ENCODE measurements at regions of chr11 and their contacts with region 1.

Region 1: DNA sequence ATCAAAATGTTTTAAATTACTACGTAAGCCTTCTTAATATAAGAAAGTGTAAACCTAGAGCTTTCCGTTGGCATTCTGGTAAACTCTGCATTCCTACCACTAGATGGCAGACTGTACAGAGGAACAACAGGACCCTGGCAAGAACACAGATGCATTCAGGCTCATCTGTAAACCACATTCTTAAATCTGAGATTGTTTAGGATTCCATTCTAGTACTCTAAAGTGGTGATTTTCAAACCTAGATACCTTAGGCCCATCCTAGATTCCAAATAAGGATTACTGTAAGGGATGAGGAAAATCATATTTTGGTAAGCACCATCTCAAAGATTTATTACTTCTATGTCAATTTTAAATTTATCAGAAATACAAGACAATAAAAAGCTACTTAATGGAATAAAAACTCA is 26.9 kb downstream of the PICALM start:
- DNase-seq: peak; percentile 86 to 93 (median 92)
- H3K4me3 ChIP-seq: peak overlapping the region in 1 of 7 experiments; percentile 37
- H3K27ac ChIP-seq: peak overlapping the region in 1 of 2 experiments; percentile 58
- H3K4me1 ChIP-seq: peaks cover 0 to 37% (median 21%) of the 10 kb centered on the region in 4 experiments
- H3K27me3 ChIP-seq: no peaks in the 10 kb centered on the region

Region 2: DNA sequence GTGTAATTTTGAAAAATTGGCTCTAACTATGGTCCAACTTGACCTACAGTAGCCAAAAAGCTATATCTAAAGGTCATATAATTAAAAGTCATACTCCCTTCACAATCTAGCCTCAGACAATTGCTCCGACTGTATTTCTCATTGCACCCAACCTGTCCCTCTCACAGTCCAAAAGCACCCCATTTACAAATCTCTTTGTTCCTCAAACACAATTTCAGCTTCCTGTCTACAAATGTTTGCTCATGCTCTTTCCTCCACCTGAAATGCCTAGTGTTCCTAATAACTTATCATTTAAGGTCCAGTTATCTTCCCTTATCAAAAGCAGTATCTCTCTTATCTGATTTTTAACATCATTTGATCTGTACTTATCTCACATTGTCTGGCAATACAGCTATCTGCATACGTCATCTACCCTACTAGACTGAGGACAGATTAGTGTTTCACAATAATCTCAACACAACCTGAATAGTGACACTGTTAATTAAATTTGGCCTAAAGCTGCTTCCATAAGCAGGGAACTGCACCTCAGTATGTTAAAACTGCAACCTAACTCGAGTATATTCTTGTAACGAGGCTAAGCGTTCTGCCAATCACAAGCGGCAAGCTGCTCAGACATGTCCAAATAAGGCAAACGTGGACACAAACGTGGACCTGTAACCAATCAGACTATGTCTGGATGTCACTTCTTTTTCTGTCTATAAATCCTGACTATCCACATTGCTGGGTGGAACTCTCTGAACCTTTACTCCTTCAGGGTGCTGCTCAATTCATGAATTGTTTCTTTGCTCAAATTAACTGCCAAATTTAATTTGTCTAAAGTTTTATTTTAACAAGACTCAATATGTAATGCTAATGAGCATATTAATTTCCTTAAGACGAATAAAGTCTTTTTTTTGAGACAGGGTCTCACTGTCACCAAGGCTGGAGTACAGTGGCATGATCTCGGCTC is 11.0 kb after region 1 on chr11:
- CTCF ChIA-PET with region 1: interaction called, 32 read pairs
- POLR2A ChIA-PET with region 1: no interaction called
- DNase-seq: no peak
- H3K4me3 ChIP-seq: no peak overlapping the region
- H3K27ac ChIP-seq: no peak overlapping the region
- H3K4me1 ChIP-seq: peaks cover 9 to 19% (median 13%) of the 10 kb centered on the region in 4 experiments
- H3K27me3 ChIP-seq: no peaks in the 10 kb centered on the region

Region 3: GRCh38 chr11:86108890-86109638 is 67.1 kb after region 1 on chr11:
- CTCF ChIA-PET with region 1: no interaction called
- POLR2A ChIA-PET with region 1: no interaction called
- DNase-seq: no peak
- H3K4me3 ChIP-seq: no peak overlapping the region
- H3K27ac ChIP-seq: no peak overlapping the region
- H3K4me1 ChIP-seq: peaks cover 3 to 20% (median 10%) of the 10 kb centered on the region in 4 experiments
- H3K27me3 ChIP-seq: no peaks in the 10 kb centered on the region

Region 4: GRCh38 chr11:86218125-86219084 is 176.4 kb after region 1 on chr11:
- CTCF ChIA-PET with region 1: interaction called, 26 read pairs
- POLR2A ChIA-PET with region 1: no interaction called
- DNase-seq: peak; percentile 72 to 89 (median 81)
- H3K4me3 ChIP-seq: peak overlapping the region in 5 of 7 experiments; percentile 24 to 75 (median 32)
- H3K27ac ChIP-seq: no peak overlapping the region
- H3K4me1 ChIP-seq: peaks cover 0 to 7% (median 3%) of the 10 kb centered on the region in 4 experiments
- H3K27me3 ChIP-seq: no peaks in the 10 kb centered on the region

Region 5: DNA sequence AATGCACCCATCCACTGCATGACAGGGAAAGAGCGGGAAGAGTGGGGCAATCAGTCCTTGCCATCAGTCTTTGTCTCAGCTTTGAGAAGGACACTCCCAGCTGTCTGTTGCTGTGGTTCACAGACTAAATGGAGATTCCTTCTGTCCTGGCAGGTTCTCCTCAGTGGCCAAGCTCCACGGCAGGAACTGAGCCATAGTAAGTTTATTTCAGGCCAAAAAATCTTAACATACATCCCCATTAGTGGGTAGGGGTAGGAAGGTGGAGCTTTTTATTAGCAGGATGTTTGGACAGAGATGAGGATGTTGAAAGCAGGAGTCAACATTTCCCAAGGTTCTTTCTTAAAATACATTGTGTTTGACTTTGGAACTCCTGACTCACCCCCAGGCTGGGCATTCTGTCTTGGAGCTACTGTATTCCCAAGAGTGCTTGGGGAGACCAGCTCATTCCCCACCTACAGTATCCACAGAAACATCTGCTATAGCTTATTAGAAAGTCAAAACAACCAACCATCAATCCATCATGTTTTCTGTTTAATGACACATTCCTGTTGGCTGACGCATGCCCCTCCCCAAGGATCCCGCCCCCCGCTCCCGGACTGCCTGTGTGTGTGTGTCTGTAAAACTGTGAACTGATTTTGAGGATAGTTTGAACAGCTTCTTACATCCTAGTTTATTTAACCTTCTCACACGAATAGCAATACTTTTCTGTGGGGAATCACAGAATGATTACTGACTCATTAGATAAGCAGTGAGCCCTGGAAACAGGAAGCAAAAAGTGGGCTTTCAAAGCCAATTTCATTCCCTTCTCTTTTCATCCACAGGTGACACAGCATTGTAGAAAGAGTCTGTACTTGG is 442.2 kb after region 1 on chr11:
- CTCF ChIA-PET with region 1: no interaction called
- POLR2A ChIA-PET with region 1: no interaction called
- DNase-seq: peak in 2 of 3 donors; percentile 23 to 27
- H3K4me3 ChIP-seq: no peak overlapping the region
- H3K27ac ChIP-seq: no peak overlapping the region
- H3K4me1 ChIP-seq: peaks cover 3 to 18% (median 15%) of the 10 kb centered on the region in 4 experiments
- H3K27me3 ChIP-seq: no peaks in the 10 kb centered on the region

Measured in common myeloid progenitor, CD34-positive (primary cell).